HEK293T (cell line): ENCODE measurements at regions of chr7 and their contacts with region 1.

Region 1: DNA sequence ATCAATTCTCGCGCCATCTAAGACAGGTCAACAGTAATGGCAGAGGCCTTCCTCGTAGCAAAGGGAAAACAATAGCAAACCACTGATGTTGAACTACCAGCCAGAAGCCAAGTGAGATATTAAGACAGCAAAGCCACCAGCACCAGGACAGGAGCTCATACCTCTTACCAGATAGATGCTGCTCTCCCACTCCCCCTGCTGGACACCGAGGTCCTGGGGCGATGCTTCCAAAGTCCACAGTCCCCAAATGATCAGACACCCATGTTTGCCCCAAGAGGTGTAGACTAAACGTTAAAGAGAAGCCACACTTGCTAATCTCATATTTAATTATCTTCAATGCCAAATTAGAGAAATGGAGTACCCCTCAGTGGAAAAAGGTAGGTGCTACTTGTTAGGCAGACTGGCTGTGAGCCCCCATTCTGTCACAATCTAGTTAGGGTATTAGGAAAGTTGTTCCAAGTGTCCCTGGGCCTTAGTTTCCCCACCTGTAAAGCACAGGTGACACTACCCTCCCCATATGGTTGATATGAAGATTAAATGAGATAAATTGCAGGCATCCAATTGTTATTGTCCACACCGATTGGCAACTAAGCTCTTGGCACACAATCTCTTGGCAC is 39.9 kb downstream of the TOMM7 start:
- DNase-seq: peak; percentile 79

Region 2: DNA sequence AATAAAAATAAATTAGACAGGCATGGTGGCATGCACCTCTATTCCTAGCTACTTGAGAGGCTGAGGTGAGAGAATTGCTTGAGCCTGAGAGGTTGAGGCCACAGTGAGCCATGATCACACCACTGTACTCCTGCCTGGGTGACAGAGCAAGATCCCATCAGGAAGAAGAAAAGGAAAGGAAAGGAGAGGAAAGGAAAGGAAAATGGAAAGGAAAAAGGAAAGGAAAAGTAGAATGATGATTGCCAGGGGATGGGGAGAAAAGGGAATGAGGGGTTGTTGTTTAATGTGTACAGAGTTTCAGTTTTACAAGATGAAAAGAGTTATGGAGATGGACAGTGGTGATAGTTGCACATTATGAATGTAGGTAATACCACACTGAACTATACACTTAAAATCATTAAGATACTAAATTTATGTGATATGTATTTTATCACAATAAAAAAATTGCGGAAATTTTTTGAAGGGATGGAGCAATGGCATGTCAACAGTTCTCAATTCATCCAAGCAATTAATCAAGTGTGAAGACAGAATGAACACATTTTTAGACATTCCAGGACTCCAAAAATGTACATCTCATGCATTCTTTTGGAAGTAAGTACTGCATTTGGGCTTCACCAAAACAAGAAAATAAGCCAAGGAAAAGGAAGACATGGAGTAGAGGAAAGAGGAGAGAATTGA is 11.4 kb before region 1 on chr7:
- CTCF ChIA-PET with region 1: interaction called, 12 read pairs
- POLR2A ChIA-PET with region 1: no interaction called
- DNase-seq: no peak

Region 3: DNA sequence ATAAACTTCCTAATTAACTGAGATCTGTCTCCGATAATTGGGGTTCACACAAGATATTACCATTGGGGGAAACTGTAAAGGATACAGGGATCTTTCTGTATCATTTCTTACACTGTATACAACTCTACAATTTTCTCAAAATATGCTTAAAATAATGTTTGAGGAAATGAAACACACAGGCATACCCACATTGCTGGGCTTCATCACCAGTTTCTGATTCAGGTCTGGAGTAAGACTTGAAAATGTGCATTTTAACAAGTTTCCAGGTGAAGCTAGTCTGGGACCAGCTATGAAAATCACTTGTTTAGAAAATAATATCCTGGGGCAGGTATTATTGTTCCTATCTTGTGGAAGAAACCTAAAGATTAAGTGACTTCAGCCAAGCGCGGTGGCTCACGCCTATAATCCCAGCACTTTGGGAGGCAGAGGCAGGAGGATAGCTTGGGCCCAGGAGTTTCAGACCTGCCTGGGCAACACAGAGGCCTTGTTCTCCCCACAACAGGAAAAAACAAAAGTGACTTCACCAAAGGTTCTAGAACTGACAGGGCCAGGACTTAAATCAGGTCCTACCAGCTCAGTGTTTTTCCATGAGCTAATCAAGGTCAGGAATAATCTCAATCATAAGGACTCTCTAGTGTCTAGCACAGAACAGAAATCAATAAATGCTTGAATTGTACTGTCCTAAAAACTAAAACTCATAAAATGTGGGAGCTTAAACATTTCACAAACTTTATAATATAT is 27.3 kb after region 1 on chr7:
- CTCF ChIA-PET with region 1: interaction called, 10 read pairs
- POLR2A ChIA-PET with region 1: no interaction called
- DNase-seq: no peak